Posterior cingulate gyrus (tissue), 11 donors: ENCODE measurements at regions of chr1 and their contacts with region 1.

Region 1: GRCh38 chr1:153572569-153573015 is 6.9 kb upstream of the S100A2 start:
- DNase-seq: peak; percentile 53 to 96 (median 82)

Region 2: DNA sequence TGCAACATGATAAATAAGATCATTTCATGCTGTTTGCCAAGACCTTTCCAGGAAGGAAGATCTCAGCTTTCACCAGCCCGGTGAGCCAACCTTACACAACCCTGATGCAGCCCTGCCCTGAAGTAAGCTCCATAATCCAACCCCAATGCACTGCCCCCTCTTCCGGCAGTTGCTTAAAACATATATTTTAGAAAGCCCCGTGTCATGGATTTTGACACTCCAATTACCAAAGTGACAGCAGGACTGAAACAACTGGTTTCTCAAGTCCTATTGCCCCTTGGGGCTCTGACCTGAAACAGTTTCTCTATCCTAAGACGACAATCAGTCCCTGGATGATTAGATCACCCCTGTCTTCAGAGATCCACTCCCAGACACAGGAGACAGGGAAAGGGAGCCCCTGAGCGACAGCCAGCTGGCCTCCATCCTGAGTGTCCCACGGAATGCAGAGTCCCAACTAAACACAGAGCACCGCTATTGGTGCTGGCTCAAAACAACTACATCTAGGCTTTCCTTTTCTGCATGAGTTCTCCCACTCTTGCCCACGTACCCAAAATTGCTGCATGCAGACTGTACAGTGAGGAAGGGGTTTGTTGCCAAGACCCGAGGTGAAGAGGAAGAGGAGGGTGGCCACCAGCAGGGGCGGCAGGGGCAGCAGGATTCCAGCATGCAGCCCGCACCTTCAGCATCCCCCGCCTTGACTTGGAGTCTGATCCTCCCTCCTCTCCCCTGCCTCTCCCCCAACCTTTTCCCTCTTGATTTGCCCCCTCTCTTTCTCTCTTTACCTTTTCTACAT is 207.1 kb before region 1 on chr1:
- intact Hi-C with region 1: no loop called
- DNase-seq: no peak

Region 3: DNA sequence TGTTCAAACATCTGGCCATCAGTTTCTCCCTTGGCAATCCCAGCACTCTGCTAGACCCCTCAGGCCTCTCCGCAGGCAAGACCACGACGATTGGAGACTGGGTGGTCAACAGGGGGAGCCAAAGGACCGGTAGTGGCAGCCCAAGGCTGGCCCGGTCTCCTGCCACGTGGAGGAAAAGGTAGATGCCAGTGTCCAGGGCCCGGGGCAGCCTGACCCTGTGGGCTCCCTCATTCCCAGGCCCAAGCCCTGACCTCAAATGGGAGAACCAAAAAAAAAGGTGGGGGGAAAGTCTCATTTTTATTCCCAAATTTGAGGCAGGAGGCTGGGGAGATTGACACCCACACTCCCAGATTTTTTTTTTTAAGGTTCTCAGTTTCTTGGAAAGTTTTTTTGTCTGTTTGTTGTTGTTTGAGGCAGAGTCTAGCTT is 61.6 kb before region 1 on chr1:
- intact Hi-C with region 1: loop called (anchors 1 kb)
- DNase-seq: peak; percentile 62 to 96 (median 76)

Region 4: GRCh38 chr1:153626922-153627796 is 54.6 kb after region 1 on chr1 and contains the start of gene S100A13:
- intact Hi-C with region 1: loop called (anchors 5 kb)
- DNase-seq: peak in 8 of 10 donors; percentile 45 to 92 (median 62)

Region 5: DNA sequence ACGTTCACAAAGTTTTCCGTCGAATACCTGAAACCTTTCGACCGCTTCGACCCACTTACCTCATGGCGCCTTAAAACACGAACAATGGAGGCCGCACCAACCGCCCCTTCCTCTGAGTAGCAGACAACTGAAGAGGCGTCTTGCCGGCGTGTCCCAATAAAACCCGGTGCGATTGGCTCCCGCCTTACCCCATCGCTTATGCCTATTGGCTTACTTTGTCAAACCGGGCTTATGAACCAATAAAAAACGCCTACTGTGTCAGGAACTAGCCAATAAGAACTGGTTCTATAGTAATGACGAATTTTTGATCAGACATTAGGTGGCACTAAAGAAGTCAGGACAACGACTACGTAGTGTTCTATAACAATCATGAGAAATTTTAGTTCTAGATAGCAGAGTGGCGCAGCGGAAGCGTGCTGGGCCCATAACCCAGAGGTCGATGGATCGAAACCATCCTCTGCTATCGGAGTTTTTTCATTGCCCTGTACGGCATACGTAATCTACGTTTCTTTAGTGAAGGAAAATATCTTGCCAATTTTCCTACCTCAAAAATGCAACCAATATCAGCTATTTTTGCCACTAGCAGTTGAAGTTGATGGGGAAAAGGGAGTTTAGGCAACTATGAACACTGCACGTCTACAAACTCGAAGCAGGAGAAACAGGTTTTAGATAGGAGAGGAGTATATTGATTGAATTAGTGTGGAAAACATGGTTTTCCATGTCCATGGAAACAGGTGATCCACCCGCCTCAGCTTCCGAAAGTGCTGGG is 98.5 kb after region 1 on chr1 and contains the start of gene ILF2:
- intact Hi-C with region 1: loop called (anchors 2 kb)
- DNase-seq: peak; percentile 88 to 99 (median 94)